ENCODE measurements at regions of chr19 and their contacts with region 1.

Region 1: DNA sequence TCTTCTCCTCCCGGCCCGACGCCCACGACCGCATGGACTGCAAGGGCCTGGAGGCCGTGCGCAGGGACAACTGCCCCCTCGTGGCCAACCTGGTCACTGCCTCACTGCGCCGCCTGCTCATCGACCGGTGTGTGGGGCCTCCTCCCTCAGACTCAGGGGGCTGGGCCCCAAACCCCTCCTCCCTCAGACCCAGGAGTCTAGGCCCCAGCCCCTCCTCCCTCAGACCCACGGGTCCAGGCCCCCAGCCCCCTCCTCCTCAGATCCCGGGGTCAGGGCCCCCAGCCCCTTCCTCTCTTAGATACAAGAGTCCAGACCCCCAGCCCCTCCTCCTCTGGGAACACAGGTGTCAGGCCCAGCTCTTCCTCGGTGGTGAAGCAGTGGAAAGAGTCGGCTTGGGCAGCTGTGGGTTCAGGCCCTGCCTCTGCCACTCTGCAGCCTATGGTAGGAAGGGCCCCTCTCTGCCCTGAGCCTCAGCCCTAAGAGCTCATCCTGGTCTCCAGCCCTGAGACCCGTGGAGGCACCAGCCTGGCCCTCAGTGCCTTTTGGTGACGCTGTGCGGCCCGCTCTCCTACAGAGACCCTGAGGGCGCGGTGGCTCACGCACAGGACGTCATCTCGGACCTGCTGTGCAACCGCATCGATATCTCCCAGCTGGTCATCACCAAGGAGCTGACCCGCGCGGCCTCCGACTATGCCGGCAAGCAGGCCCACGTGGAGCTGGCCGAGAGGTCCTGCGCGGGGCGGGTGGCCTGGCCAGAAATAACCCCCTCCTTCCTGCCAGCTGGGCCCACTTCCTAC is 3.7 kb upstream of the SPIB start:
- DNase-seq: peak; percentile 89
- H3K4me3 ChIP-seq: peak overlapping the region; percentile 60
- H3K27ac ChIP-seq: peak overlapping the region; percentile 98
- H3K4me1 ChIP-seq: peaks cover 44% of the 10 kb centered on the region
- CTCF ChIP-seq: peak; percentile 90

Region 2: GRCh38 chr19:50368649-50369570 is 46.2 kb before region 1 on chr19:
- CTCF ChIA-PET with region 1: no interaction called
- POLR2A ChIA-PET with region 1: interaction called, 3 read pairs
- intact Hi-C with region 1: loop called (anchors 2 kb)
- DNase-seq: peak; percentile 92
- H3K4me3 ChIP-seq: peak overlapping the region; percentile 81
- H3K27ac ChIP-seq: peak overlapping the region; percentile 74
- H3K4me1 ChIP-seq: peaks cover 55% of the 10 kb centered on the region
- CTCF ChIP-seq: peak; percentile 92

Region 3: DNA sequence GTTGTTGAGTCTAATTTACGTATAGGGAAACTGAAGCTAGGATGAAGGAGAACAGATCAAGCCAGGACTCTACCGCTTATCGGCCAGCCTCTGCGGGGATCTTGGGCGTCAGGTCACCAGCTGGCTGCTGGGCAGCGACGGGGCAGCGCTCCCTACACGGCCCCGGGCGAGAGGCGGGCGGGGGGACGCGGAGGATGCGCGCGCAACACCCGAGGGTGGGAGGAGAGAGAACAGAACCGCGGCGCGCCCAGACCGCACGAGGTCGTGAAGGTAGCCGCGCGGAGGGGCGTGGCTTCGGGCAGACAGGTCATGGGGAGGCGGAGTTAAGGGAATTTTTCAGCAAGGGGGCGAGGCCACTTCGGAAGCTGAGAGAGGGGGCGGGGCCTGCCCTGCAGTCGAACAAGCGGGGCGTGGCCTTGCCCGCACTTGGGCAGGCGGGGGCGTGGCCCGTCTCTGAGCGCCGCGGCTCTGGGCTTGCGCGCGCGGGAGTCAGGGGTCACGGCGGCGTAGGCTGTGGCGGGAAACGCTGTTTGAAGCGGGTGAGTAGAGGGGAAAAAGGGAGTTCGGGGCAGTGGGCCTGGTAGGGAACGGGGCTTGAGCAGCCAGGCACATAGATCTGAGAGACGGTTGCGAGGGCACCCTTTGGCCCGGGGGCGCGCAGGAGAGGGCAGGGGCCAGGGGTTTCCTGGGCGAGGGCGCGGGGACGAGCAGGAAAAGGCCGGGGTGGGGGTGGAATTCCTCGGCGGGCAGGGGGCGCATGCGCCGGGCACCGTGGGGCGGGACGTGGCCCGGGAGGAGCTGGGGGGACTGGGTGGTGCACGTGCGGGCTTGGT is 31.0 kb before region 1 on chr19 and contains the start of gene POLD1:
- CTCF ChIA-PET with region 1: interaction called, 4 read pairs
- POLR2A ChIA-PET with region 1: no interaction called
- intact Hi-C with region 1: loop called (anchors 2 kb)
- DNase-seq: peak; percentile 99
- H3K4me3 ChIP-seq: peak within 1 kb of the TSS; percentile 85
- H3K27ac ChIP-seq: peak within 1 kb of the TSS; percentile 59
- H3K4me1 ChIP-seq: peaks cover 19% of the 10 kb centered on the region
- CTCF ChIP-seq: no peak
- total RNA-seq, gene POLD1: 147 and 233 TPM in 2 replicates

Region 4: GRCh38 chr19:50431343-50432220 is 16.5 kb after region 1 on chr19:
- CTCF ChIA-PET with region 1: no interaction called
- POLR2A ChIA-PET with region 1: no interaction called
- intact Hi-C with region 1: loop called (anchors 1 kb)
- DNase-seq: peak; percentile 87
- H3K4me3 ChIP-seq: peak overlapping the region; percentile 68
- H3K27ac ChIP-seq: peak overlapping the region; percentile 87
- H3K4me1 ChIP-seq: peaks cover 87% of the 10 kb centered on the region
- CTCF ChIP-seq: no peak

Region 5: GRCh38 chr19:50461066-50461875 is 46.2 kb after region 1 on chr19:
- CTCF ChIA-PET with region 1: no interaction called
- POLR2A ChIA-PET with region 1: no interaction called
- intact Hi-C with region 1: loop called (anchors 1 kb)
- DNase-seq: peak; percentile 86
- H3K4me3 ChIP-seq: no peak overlapping the region
- H3K27ac ChIP-seq: peak overlapping the region; percentile 81
- H3K4me1 ChIP-seq: peaks cover 25% of the 10 kb centered on the region
- CTCF ChIP-seq: peak; percentile 89

Region 6: DNA sequence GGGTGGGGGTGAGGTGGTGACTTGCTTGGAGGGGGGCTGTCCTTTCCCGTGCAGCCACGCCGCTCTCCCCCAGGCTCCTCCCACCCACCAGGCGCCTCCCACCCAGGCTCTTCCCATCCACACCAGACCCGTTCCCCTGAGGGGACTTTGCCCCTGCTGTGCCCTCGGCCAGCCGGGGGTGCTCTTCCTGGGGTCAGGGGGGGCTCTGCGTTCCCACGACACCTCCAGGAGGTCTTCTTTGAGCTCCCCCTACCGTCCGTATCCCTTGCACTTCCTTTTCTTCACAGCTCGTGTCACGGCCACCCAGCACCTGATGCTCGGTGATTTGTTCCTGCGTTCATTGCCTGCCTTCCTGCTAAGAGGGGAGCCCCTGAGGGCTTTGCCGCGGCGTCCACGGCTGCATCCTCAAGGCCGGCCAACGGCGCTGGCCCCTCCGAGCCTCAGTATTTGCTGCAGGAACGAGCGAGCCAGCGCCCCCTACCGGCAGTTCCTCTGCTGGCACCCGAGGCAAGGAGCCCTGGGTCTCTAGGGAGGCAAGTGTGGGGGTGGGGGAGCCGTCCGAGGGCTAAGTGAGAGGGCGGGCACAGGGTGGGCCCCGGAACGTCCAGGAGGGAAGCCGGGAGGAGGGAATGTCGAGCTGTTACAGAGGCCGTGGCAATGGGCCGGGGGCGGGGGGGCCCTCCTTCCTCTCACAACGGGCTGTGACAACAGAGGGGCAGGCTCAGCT is 141.4 kb after region 1 on chr19:
- CTCF ChIA-PET with region 1: interaction called, 13 read pairs
- POLR2A ChIA-PET with region 1: no interaction called
- intact Hi-C with region 1: no loop called
- DNase-seq: peak; percentile 82
- H3K4me3 ChIP-seq: peak overlapping the region; percentile 69
- H3K27ac ChIP-seq: no peak overlapping the region
- H3K4me1 ChIP-seq: no peaks in the 10 kb centered on the region
- CTCF ChIP-seq: peak; percentile 100